PC-3 (cell line): ENCODE measurements at regions of chr10 and their contacts with region 1.

Region 1: GRCh38 chr10:56116684-56117083 is 244.4 kb downstream of the ZWINT start:
- DNase-seq: peak; percentile 57
- ATAC-seq: peak; percentile 94
- H3K4me3 ChIP-seq: no peak overlapping the region
- H3K27ac ChIP-seq: no peak overlapping the region
- H3K4me1 ChIP-seq: no peaks in the 10 kb centered on the region
- H3K27me3 ChIP-seq: no peaks in the 10 kb centered on the region
- CTCF ChIP-seq: peak; percentile 85

Region 2: DNA sequence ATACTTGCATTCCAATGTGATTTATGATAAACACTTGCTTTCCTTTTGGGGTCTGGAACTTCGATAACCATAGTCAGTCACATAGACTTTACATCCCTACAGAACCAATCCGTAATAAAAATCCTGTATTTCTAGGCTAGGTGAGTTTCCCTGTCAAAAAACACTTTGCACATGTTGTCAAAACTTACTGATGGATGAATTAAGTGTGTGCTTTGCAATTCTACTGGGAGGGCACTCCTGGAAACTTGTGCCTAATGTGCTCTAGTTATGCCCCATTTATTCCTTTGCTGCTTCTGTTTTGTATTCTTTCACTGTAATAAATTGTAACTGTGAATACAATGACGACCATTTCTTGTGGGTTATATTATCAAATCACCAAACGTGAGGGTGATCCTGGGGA is 630.9 kb before region 1 on chr10:
- CTCF ChIA-PET with region 1: no interaction called
- POLR2A ChIA-PET with region 1: no interaction called
- intact Hi-C with region 1: no loop called
- DNase-seq: no peak
- ATAC-seq: no peak
- H3K4me3 ChIP-seq: no peak overlapping the region
- H3K27ac ChIP-seq: no peak overlapping the region
- H3K4me1 ChIP-seq: no peaks in the 10 kb centered on the region
- H3K27me3 ChIP-seq: no peaks in the 10 kb centered on the region
- CTCF ChIP-seq: no peak

Region 3: GRCh38 chr10:55631071-55631654 is 485.5 kb before region 1 on chr10:
- CTCF ChIA-PET with region 1: interaction called, 4 read pairs
- POLR2A ChIA-PET with region 1: no interaction called
- intact Hi-C with region 1: loop called (anchors 1 kb)
- DNase-seq: peak; percentile 86
- ATAC-seq: peak; percentile 89
- H3K4me3 ChIP-seq: peak overlapping the region; percentile 80
- H3K27ac ChIP-seq: no peak overlapping the region
- H3K4me1 ChIP-seq: peaks cover 13% of the 10 kb centered on the region
- H3K27me3 ChIP-seq: peaks cover 13% of the 10 kb centered on the region
- CTCF ChIP-seq: peak; percentile 91

Region 4: GRCh38 chr10:55668326-55668922 is 448.3 kb before region 1 on chr10:
- CTCF ChIA-PET with region 1: interaction called, 12 read pairs
- POLR2A ChIA-PET with region 1: no interaction called
- intact Hi-C with region 1: loop called (anchors 1 kb)
- DNase-seq: peak; percentile 76
- ATAC-seq: peak; percentile 81
- H3K4me3 ChIP-seq: no peak overlapping the region
- H3K27ac ChIP-seq: no peak overlapping the region
- H3K4me1 ChIP-seq: no peaks in the 10 kb centered on the region
- H3K27me3 ChIP-seq: no peaks in the 10 kb centered on the region
- CTCF ChIP-seq: peak; percentile 84

Region 5: GRCh38 chr10:55742487-55742886 is 374.2 kb before region 1 on chr10:
- CTCF ChIA-PET with region 1: no interaction called
- POLR2A ChIA-PET with region 1: no interaction called
- intact Hi-C with region 1: loop called (anchors 5 kb)
- DNase-seq: no peak
- ATAC-seq: no peak
- H3K4me3 ChIP-seq: no peak overlapping the region
- H3K27ac ChIP-seq: no peak overlapping the region
- H3K4me1 ChIP-seq: peaks cover 10% of the 10 kb centered on the region; the same call in 1 of the 2 replicates
- H3K27me3 ChIP-seq: no peaks in the 10 kb centered on the region
- CTCF ChIP-seq: no peak

Region 6: GRCh38 chr10:55989188-55989587 is 127.5 kb before region 1 on chr10:
- CTCF ChIA-PET with region 1: interaction called, 4 read pairs
- POLR2A ChIA-PET with region 1: no interaction called
- intact Hi-C with region 1: loop called (anchors 1 kb)
- DNase-seq: peak; percentile 32
- ATAC-seq: peak; percentile 33; the same call in 1 of the 2 replicates
- H3K4me3 ChIP-seq: no peak overlapping the region
- H3K27ac ChIP-seq: no peak overlapping the region
- H3K4me1 ChIP-seq: no peaks in the 10 kb centered on the region
- H3K27me3 ChIP-seq: no peaks in the 10 kb centered on the region
- CTCF ChIP-seq: peak; percentile 71

Region 7: GRCh38 chr10:56449770-56450169 is 333.1 kb after region 1 on chr10:
- CTCF ChIA-PET with region 1: no interaction called
- POLR2A ChIA-PET with region 1: no interaction called
- intact Hi-C with region 1: loop called (anchors 5 kb)
- DNase-seq: peak; percentile 53
- ATAC-seq: peak; percentile 91
- H3K4me3 ChIP-seq: no peak overlapping the region
- H3K27ac ChIP-seq: no peak overlapping the region
- H3K4me1 ChIP-seq: no peaks in the 10 kb centered on the region
- H3K27me3 ChIP-seq: no peaks in the 10 kb centered on the region
- CTCF ChIP-seq: peak; percentile 86